ENCODE measurements at regions of chr9 and their contacts with region 1.

Region 1: GRCh38 chr9:112858625-112859147 is 32.0 kb downstream of the SLC46A2 start:
- DNase-seq: no peak
- H3K4me3 ChIP-seq: no peak overlapping the region
- H3K27ac ChIP-seq: peak overlapping the region in 18 of 59 donors; percentile 2 to 65 (median 23)
- H3K27me3 ChIP-seq: no peaks in the 10 kb centered on the region
- CTCF ChIP-seq: no peak

Region 2: GRCh38 chr9:112900488-112900887 is 41.8 kb after region 1 on chr9:
- intact Hi-C with region 1: loop called in 1 of 2 experiments (anchors 5 kb)
- DNase-seq: no peak
- H3K4me3 ChIP-seq: no peak overlapping the region
- H3K27ac ChIP-seq: no peak overlapping the region
- H3K27me3 ChIP-seq: no peaks in the 10 kb centered on the region
- CTCF ChIP-seq: no peak

Measured in dorsolateral prefrontal cortex (tissue), 120 donors.